CD8-positive, alpha-beta T cell (primary cell): ENCODE measurements at regions of chr10 and their contacts with region 1.

Region 1: DNA sequence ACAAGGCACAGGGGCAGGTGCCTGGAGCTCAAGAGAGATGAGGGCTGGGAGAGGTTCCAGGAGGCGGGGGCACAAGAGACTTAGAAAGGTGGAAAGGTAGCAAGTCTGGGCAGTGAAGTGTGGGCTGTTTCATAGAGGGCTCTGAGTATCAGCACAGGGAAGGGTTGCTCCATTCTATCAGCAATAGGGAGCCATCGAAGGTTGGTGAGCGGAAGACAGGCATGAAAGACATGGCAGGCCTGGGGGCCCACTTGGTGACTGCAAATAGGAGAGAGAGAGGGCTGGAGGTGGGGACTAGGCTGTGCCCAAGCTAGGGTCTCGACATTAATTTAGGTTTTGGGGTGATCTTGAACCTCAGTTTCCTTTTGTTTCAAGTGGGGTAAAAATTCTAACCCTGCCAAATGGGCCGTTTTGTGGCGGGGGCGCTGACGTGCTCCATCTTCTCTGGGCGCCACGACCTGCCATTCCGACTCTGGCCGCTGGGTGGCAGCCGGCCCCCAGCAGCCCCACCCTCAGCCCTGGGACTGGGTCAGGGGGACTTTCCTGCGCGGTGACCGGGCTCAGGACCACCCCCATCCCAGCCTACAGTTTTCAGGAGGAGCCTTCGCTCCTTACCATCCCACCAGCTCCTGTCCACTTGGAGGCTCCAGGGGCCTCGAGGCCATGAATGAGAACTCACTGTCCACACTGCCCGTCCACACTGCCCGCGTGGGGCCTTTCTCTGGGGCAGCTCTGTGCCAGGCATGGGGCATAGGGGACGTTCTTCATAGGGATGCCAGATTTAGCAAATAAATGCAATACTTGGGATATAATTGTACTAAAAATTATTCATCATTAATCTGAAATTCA is 37.2 kb upstream of the PCBD1 start:
- DNase-seq: peak; percentile 26 to 66 (median 49)
- ATAC-seq: peak; percentile 69
- H3K4me3 ChIP-seq: no peak overlapping the region
- H3K4me3 Mint-ChIP-seq: no peak overlapping the region
- H3K27ac ChIP-seq: no peak overlapping the region
- H3K27ac Mint-ChIP-seq: no peak overlapping the region
- H3K4me1 ChIP-seq: no peaks in the 10 kb centered on the region
- H3K4me1 Mint-ChIP-seq: peaks cover 7% of the 10 kb centered on the region
- H3K27me3 ChIP-seq: no peaks in the 10 kb centered on the region
- H3K27me3 Mint-ChIP-seq: peaks cover 3% of the 10 kb centered on the region
- CTCF ChIP-seq: peak; percentile 81

Region 2: DNA sequence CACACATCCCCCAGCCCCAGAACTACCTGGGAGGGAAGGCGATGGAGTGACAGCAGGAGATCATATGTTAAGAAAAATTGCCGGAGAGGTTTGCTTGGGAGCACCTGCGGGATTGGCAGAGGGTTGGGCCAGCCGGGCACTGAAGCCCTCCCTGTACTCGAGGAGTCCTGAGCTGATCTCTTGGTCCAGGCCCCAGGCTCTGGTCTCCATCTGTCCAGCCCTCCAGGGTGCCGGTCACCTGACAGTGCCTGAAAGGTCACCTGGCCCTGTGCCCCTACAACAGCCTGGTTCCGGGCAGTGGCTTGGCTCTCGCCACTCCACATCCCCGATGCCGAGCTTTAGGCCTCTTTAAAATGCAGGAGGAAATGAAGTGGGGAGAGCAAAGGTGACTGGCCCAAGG is 10.0 kb after region 1 on chr10:
- CTCF ChIA-PET with region 1: interaction called, 23 read pairs
- POLR2A ChIA-PET with region 1: interaction called, 3 read pairs
- intact Hi-C with region 1: no loop called
- DNase-seq: no peak
- ATAC-seq: no peak
- H3K4me3 ChIP-seq: no peak overlapping the region
- H3K4me3 Mint-ChIP-seq: no peak overlapping the region
- H3K27ac ChIP-seq: no peak overlapping the region
- H3K27ac Mint-ChIP-seq: no peak overlapping the region
- H3K4me1 ChIP-seq: no peaks in the 10 kb centered on the region
- H3K4me1 Mint-ChIP-seq: no peaks in the 10 kb centered on the region
- H3K27me3 ChIP-seq: no peaks in the 10 kb centered on the region
- H3K27me3 Mint-ChIP-seq: no peaks in the 10 kb centered on the region
- CTCF ChIP-seq: no peak

Region 3: GRCh38 chr10:70940834-70941568 is 15.4 kb after region 1 on chr10:
- CTCF ChIA-PET with region 1: interaction called, 23 read pairs
- POLR2A ChIA-PET with region 1: interaction called, 3 read pairs
- intact Hi-C with region 1: no loop called
- DNase-seq: no peak
- ATAC-seq: no peak
- H3K4me3 ChIP-seq: no peak overlapping the region
- H3K4me3 Mint-ChIP-seq: no peak overlapping the region
- H3K27ac ChIP-seq: no peak overlapping the region
- H3K27ac Mint-ChIP-seq: no peak overlapping the region
- H3K4me1 ChIP-seq: no peaks in the 10 kb centered on the region
- H3K4me1 Mint-ChIP-seq: no peaks in the 10 kb centered on the region
- H3K27me3 ChIP-seq: no peaks in the 10 kb centered on the region
- H3K27me3 Mint-ChIP-seq: peaks cover 2% of the 10 kb centered on the region
- CTCF ChIP-seq: no peak

Region 4: DNA sequence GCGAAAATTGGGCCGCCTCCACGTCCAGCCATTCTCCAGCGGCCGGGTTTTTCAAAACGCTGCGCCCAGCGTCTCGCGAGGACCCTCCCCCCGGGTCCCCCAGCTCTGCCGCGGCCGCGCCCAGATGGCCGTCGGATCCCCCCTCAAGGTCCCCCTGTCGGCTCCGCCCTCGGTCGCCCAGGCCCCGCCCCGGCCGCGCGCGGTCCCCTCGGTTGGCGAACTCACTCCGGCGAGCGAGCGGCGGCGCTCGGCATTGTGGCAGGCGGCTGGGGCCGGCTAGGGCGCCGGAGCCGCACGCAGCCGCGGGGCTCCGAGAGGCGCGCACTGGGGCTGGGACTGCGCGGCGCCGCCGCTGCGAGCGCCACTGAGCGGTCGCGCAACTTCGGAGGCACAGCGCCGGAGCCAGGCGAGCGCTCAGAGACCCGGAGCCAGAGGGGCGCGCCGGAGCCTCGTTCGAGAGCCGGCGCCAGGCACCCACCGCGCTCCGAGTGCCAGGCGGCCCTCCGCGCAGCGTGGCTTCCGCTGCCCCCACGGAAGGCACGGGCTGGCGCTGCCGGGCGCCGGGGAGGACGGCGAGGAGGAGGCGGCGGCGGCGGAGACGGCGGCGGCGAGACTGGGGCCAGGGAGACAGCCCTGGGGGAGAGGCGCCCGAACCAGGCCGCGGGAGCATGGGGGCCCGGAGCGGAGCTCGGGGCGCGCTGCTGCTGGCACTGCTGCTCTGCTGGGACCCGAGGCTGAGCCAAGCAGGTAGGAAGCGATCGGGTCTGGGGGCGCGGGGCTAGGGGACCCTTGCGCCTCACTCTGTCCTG is 286.9 kb after region 1 on chr10 and contains the start of gene UNC5B:
- CTCF ChIA-PET with region 1: no interaction called
- POLR2A ChIA-PET with region 1: no interaction called
- intact Hi-C with region 1: loop called in 1 of 2 experiments (anchors 2 kb)
- DNase-seq: peak; percentile 16 to 68 (median 51)
- ATAC-seq: peak; percentile 79
- H3K4me3 ChIP-seq: peak within 1 kb of the TSS; percentile 34 to 45
- H3K4me3 Mint-ChIP-seq: peak within 1 kb of the TSS; percentile 77
- H3K27ac ChIP-seq: no peak within 1 kb of the TSS
- H3K27ac Mint-ChIP-seq: no peak within 1 kb of the TSS
- H3K4me1 ChIP-seq: no peaks in the 10 kb centered on the region
- H3K4me1 Mint-ChIP-seq: peaks cover 18% of the 10 kb centered on the region
- H3K27me3 ChIP-seq: peaks cover 10 to 11% of the 10 kb centered on the region in 2 experiments
- H3K27me3 Mint-ChIP-seq: peaks cover 48% of the 10 kb centered on the region
- CTCF ChIP-seq: no peak
- total RNA-seq, gene UNC5B: 0.08 TPM